ENCODE measurements at regions of chr10 and their contacts with region 1.

Region 1: GRCh38 chr10:97025613-97026242 is 160.0 kb downstream of the SLIT1 start:
- DNase-seq: peak; percentile 70
- CTCF ChIP-seq: peak; percentile 44

Region 2: DNA sequence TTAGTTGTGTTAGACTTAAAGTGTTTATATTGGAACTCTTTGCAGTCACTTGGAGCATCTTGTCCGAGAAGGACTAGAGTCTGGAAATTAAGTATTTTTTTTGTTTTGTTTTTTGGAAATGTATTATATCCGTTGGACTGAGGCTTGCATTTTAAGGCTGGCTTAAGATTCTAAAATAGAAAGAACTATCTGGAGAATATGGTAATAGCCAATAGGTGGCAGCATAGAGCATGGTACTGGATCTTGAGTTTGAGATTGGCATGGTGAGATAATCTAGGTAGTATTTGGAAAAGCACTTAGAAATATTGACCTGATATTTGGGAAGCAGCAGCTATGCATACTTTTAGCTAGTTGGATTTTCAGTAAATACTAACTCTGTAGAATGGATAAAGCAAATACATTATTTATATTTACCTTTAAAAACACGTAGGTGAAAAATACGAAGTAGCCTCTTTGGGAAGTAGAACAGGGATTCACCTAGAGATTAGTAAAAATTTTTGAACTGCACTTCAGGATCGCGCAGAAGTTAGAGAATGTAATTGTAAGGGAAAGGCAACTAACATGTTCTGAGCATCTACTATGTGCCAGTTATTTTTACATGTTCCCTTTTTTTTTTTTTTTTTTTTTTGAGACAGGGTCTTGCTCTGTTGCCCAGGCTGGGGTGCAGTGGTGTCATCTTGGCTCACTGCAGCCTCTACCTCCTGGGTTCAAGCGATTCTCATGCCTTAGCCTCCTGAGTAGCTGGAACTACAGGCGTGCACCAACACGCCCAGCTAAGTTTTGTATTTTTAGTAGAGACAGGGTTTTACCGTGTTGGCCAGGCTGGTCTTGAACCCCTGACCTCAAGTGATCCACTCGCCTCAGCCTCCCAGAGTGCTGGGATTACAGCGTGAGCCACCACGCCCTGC is 115.0 kb before region 1 on chr10:
- CTCF ChIA-PET with region 1: interaction called, 30 read pairs
- POLR2A ChIA-PET with region 1: no interaction called
- DNase-seq: peak; percentile 57
- CTCF ChIP-seq: peak; percentile 72

Region 3: DNA sequence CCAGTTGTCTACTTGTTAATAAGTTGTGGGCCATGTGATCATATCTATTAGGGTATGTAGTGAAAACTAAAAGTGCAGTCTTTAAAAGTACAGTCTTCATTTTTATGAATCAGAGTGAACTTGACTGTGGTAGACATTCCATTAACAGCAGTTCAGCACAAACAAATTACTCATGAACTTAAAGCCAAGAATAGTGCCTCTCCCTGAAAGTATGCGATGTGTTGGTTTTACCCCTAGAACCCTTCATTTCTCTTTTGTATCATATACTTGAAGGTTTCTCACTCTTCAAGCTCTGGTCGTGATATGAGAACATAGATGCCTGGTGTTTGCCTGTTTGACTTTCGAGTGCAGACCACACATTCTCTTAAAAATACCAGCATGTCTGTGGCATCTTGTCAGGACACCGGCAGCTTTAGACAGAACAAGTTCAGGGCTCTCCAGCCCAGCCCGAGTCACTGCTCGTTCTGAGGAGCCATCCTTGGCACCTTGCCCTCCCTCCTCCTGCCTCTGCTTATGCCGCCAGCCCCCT is 34.4 kb before region 1 on chr10:
- CTCF ChIA-PET with region 1: interaction called, 10 read pairs
- POLR2A ChIA-PET with region 1: no interaction called
- DNase-seq: no peak
- CTCF ChIP-seq: no peak

Region 4: GRCh38 chr10:97010695-97011206 is 15.0 kb before region 1 on chr10:
- CTCF ChIA-PET with region 1: interaction called, 22 read pairs
- POLR2A ChIA-PET with region 1: no interaction called
- DNase-seq: no peak
- CTCF ChIP-seq: no peak

Measured in GM10248 (cell line).